Activated CD8-positive, alpha-beta T cell treated with anti-CD3 and anti-CD28 coated beads for 36 hours (primary cell): ENCODE measurements at regions of chr17 and their contacts with region 1.

Region 1: GRCh38 chr17:63697341-63698286 is 2.3 kb downstream of the LIMD2 start:
- DNase-seq: peak; percentile 91
- ATAC-seq: peak; percentile 55
- H3K4me3 Mint-ChIP-seq: peak overlapping the region; percentile 83
- H3K27ac Mint-ChIP-seq: peak overlapping the region; percentile 94
- H3K4me1 Mint-ChIP-seq: peaks cover 53% of the 10 kb centered on the region
- H3K27me3 Mint-ChIP-seq: no peaks in the 10 kb centered on the region
- CTCF ChIP-seq: peak; percentile 75

Region 2: GRCh38 chr17:63621766-63622519 is 75.7 kb before region 1 on chr17 and contains the start of gene MAP3K3:
- CTCF ChIA-PET with region 1: interaction called, 7 read pairs
- POLR2A ChIA-PET with region 1: interaction called, 34 read pairs
- intact Hi-C with region 1: loop called (anchors 5 kb)
- DNase-seq: peak; percentile 99
- ATAC-seq: peak; percentile 91
- H3K4me3 Mint-ChIP-seq: peak within 1 kb of the TSS; percentile 99
- H3K27ac Mint-ChIP-seq: peak within 1 kb of the TSS; percentile 95
- H3K4me1 Mint-ChIP-seq: peaks cover 38% of the 10 kb centered on the region
- H3K27me3 Mint-ChIP-seq: no peaks in the 10 kb centered on the region
- CTCF ChIP-seq: no peak
- total RNA-seq, gene MAP3K3: 20.6 to 22.5 TPM

Region 3: DNA sequence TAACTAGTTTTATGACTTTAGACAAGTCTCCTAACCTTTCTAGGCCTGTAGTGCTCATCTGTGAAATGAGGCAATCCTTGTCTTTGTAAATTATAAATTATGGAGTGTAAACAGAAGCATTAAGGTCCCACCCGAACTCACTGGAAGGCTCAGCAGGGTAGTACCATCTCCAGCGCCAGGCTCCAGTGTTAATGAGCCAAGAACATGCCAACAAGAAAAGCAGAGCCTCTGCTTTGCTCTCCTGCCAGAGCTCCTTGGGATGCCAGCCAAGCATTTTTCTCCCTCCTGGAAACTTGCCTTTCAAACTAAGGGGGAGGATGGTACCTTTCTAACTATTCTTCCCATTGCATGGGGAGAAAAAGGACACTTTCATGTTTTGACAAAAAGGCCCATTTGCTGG is 12.6 kb before region 1 on chr17:
- CTCF ChIA-PET with region 1: interaction called, 5 read pairs
- POLR2A ChIA-PET with region 1: interaction called, 10 read pairs
- intact Hi-C with region 1: no loop called
- DNase-seq: no peak
- ATAC-seq: no peak
- H3K4me3 Mint-ChIP-seq: no peak overlapping the region
- H3K27ac Mint-ChIP-seq: peak overlapping the region; percentile 34
- H3K4me1 Mint-ChIP-seq: peaks cover 19% of the 10 kb centered on the region
- H3K27me3 Mint-ChIP-seq: no peaks in the 10 kb centered on the region
- CTCF ChIP-seq: no peak

Region 4: GRCh38 chr17:63741221-63742049 is 43.8 kb after region 1 on chr17 and contains the start of gene STRADA:
- CTCF ChIA-PET with region 1: interaction called, 6 read pairs
- POLR2A ChIA-PET with region 1: interaction called, 25 read pairs
- intact Hi-C with region 1: no loop called
- DNase-seq: peak; percentile 99
- ATAC-seq: peak; percentile 96
- H3K4me3 Mint-ChIP-seq: peak within 1 kb of the TSS; percentile 94
- H3K27ac Mint-ChIP-seq: peak within 1 kb of the TSS; percentile 96
- H3K4me1 Mint-ChIP-seq: peaks cover 21% of the 10 kb centered on the region
- H3K27me3 Mint-ChIP-seq: no peaks in the 10 kb centered on the region
- CTCF ChIP-seq: no peak
- total RNA-seq, gene STRADA: 44.8 to 48.8 TPM

Region 5: DNA sequence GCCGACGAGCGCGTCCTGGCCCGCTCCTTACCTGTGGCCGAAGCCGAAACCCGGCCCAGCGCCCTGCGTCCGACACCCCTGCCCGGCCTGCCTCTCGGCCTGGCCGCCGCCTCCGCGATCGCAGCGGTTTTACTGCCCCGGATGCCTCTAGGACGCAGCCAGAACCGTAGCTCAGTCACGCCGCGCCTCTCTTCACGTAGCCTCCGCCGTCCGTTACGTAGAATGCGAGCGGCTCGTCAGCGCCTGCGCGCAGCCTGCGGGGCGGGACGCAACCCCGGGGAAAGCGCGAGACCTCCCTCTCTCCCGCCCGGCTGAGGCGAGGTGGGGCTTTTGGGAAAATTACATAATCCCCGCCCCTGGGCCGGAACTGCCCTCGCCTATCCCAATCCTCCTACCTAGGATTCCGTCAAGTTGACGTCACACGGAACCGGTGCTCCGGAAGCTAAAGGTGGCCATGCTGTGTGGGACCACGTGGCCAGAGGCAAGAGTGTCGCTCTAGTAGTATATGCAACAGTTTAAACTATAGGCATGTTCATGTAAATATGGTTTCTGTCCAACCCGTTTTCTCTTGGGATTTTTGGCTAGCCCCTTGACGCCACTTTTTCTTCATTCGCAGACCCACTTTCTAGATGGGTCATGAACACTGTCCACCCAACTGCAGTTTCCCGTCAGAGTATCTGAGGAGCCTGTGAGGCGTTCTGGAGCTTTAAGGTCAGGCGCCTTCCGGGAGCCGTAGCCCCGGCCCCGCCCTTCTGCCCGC is 75.9 kb after region 1 on chr17 and contains the start of gene CCDC47:
- CTCF ChIA-PET with region 1: interaction called, 7 read pairs
- POLR2A ChIA-PET with region 1: interaction called, 96 read pairs
- intact Hi-C with region 1: no loop called
- DNase-seq: peak; percentile 98
- ATAC-seq: peak; percentile 86
- H3K4me3 Mint-ChIP-seq: peak within 1 kb of the TSS; percentile 88
- H3K27ac Mint-ChIP-seq: peak within 1 kb of the TSS; percentile 100
- H3K4me1 Mint-ChIP-seq: peaks cover 48% of the 10 kb centered on the region
- H3K27me3 Mint-ChIP-seq: no peaks in the 10 kb centered on the region
- CTCF ChIP-seq: no peak
- total RNA-seq, gene CCDC47: 63.0 to 64.4 TPM